PC-3 (cell line): ENCODE measurements at regions of chr1 and their contacts with region 1.

Region 1: DNA sequence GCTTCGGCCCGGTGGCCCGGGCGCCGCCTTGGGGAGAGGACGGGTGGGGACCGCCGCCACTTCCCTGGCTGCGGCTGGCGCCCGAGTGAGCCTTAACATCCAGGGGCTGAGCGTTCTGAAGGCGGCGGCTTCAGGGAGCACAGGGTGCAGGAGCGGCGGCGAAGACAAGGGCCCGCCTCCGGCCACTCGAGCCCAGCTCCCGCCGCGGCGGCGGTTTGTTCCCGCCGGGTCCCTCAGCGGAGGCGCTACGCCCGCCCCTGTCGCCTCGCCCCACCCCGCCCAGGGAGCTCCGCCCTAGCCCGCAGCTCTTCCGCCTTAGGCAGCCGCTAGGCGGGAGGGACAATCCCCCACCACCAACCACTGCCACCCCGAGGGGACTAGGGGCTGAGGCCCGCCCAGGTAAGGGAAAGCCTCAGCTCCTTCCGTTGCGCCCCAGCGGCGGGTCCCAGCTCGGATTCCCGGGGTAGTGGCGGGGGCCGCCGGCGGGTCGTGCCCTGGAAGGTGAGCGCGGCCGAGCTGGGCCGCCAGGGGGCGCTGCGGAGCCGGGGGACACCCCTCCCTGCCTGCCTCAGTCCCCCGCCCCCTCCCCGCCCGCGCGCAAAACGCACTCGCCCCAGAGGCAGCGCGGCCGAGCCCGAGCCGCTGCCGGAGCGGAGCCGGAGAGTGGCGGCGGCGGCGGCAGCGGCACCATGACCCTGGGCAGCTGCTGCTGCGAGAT is at the start of gene FOXD2:
- DNase-seq: peak; percentile 86
- ATAC-seq: peak; percentile 82
- H3K4me3 ChIP-seq: peak within 1 kb of the TSS; percentile 77
- H3K27ac ChIP-seq: no peak within 1 kb of the TSS
- H3K4me1 ChIP-seq: peaks cover 12% of the 10 kb centered on the region; the same call in 1 of the 2 replicates
- H3K27me3 ChIP-seq: no peaks in the 10 kb centered on the region
- CTCF ChIP-seq: peak; percentile 75
- total RNA-seq, gene FOXD2: 0.80 and 0.86 TPM in 2 replicates

Region 2: DNA sequence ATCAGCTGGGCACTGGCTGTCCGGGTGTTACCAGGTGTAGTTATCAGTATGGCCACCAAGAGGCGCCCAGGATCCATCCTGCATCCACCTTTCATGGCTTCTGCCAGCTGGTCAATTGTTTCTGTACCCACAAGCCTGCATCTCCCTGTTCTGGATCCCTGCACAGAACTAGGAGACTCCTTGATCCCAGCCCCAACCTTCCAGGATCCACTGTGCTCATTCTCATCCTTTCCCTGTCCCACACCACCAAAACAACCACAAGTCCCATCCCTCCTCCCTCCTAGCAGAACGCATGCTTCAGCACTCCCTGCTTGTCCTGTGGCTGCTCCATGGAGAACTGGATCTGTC is 48.7 kb before region 1 on chr1:
- CTCF ChIA-PET with region 1: interaction called, 17 read pairs
- POLR2A ChIA-PET with region 1: no interaction called
- intact Hi-C with region 1: no loop called
- DNase-seq: peak; percentile 74
- ATAC-seq: peak; percentile 86
- H3K4me3 ChIP-seq: no peak overlapping the region
- H3K27ac ChIP-seq: no peak overlapping the region
- H3K4me1 ChIP-seq: peaks cover 6% of the 10 kb centered on the region; the same call in 1 of the 2 replicates
- H3K27me3 ChIP-seq: no peaks in the 10 kb centered on the region
- CTCF ChIP-seq: peak; percentile 82

Region 3: GRCh38 chr1:47569681-47570470 is 132.3 kb after region 1 on chr1:
- CTCF ChIA-PET with region 1: interaction called, 4 read pairs
- POLR2A ChIA-PET with region 1: no interaction called
- intact Hi-C with region 1: loop called (anchors 10 kb)
- DNase-seq: peak; percentile 92
- ATAC-seq: peak; percentile 99
- H3K4me3 ChIP-seq: no peak overlapping the region
- H3K27ac ChIP-seq: peak overlapping the region; percentile 8; the same call in 1 of the 2 replicates
- H3K4me1 ChIP-seq: peaks cover 11% of the 10 kb centered on the region
- H3K27me3 ChIP-seq: no peaks in the 10 kb centered on the region
- CTCF ChIP-seq: peak; percentile 69

Region 4: DNA sequence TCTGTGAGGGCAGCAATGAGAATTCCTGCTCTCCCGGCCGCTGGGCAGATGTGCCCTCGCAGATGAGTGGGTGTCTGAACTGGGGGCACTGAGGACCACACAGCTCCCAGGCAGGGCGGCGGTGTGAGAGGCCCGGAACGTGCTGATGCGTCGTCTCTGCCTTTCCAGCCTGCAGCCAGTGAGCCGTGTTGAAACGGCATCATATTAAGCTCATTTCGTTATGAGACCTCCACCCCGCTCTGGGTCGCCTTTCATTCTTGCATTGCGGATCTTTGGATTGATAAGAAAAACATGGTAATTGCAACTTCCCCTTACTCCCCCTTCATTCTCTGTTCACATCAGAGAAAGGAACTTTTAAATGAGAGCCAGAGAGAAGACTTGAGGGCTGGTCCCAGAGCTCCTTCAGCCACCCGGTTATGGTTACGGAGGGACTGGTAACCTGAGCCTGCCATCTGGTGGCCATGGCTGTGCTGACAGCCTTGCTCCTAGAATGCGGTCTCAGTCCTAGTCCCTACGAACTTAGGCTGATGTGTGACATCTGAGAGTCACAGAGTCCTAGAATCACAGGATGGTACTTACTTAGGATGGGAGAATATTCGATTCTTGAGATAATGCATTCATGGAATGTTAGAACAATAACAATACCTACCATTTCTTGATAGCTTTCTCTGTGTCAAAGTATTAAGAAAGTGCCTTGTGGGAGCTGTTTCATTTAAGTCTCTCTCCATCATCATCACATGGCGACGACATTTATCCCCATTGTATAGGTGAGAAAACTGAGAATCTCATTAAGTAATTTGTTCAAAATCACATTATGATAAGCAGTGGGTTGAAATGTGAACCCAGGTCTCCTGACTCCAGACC is 288.6 kb after region 1 on chr1:
- CTCF ChIA-PET with region 1: interaction called, 29 read pairs
- POLR2A ChIA-PET with region 1: interaction called, 3 read pairs
- intact Hi-C with region 1: loop called (anchors 1 kb)
- DNase-seq: peak; percentile 87
- ATAC-seq: peak; percentile 95
- H3K4me3 ChIP-seq: peak overlapping the region; percentile 46
- H3K27ac ChIP-seq: no peak overlapping the region
- H3K4me1 ChIP-seq: no peaks in the 10 kb centered on the region
- H3K27me3 ChIP-seq: peaks cover 34% of the 10 kb centered on the region
- CTCF ChIP-seq: peak; percentile 93